KBM-7 (cell line): ENCODE measurements at regions of chr3 and their contacts with region 1.

Region 1: GRCh38 chr3:101809178-101810021 is 30.4 kb downstream of the NXPE3 start:
- DNase-seq: peak; percentile 58

Region 2: GRCh38 chr3:102536456-102536855 is 727.1 kb after region 1 on chr3:
- in situ Hi-C with region 1: loop called (anchors 10 kb)
- DNase-seq: peak; percentile 51